ENCODE measurements at regions of chr1 and their contacts with region 1.

Region 1: DNA sequence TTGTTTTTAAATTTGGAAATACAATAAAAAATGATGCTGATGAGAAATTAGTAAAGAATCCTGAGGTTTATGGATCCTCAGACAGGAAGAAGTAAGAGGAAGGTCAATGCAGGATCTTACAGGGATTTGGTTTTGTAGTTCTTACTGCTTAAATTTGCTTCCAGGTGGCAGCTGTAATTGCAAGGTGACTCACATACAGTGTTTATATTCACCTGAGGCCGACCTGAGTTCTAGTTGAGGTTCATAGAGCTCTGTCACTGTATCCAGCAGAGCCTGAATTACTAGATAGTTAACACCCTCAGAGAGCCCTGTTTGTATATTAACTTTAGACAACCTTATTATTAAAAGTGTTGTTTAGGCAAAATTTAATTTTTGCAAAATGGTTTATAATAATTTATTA is 1.4 kb upstream of the WDR26 start:
- DNase-seq: peak; percentile 28
- H3K4me3 Mint-ChIP-seq: peak overlapping the region; percentile 81
- H3K27ac Mint-ChIP-seq: peak overlapping the region; percentile 83
- H3K4me1 Mint-ChIP-seq: peaks cover 40% of the 10 kb centered on the region
- H3K27me3 Mint-ChIP-seq: no peaks in the 10 kb centered on the region
- CTCF ChIP-seq: no peak

Region 2: DNA sequence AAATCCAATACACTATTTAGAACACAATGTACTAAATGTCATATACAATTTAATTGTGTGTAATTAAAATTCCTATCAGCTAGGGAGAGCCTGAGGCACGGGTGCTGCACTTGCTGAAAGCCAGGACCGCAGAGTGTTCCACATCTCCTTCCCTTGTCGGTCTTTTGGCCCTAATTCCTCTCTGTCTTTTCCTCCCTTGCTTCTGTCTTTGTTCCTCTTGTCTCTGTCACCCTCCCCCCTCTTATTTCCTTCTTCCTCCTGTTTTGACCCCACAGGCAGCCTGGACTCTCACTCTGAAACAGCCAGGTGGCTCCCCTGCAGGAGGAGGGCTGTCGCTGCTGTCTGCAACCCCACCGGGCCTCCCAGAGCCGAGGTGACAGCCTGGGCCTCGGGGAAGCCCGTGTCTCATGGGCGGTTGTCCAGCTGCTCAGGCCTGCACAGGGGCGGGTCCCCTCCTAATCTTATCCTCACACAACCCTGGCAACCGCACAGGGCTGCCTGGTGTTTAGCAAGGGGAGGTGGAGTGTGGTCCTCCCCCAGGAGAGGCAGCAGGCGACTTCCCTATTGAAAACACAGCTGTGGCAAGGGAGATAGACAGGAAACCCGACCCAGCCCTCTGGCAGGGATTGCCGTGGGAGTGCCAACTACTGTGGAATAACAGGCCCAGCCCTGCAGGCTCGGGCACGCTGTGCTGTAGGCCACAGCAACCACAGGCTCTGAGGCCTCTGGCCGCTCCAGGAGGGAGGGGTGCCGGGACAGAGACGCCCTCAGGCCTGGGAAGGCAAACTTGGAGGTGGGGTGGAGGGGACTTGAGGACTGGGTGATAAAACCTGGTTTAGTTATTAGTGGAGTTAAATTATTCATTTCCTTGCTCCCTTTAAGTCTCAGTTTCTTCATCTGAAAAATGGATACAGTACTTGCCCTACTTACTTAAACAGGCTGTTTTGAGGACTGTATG is 67.4 kb after region 1 on chr1:
- CTCF ChIA-PET with region 1: no interaction called
- intact Hi-C with region 1: loop called (anchors 2 kb)
- DNase-seq: peak; percentile 85
- H3K4me3 Mint-ChIP-seq: peak overlapping the region; percentile 18
- H3K27ac Mint-ChIP-seq: peak overlapping the region; percentile 14
- H3K4me1 Mint-ChIP-seq: peaks cover 38% of the 10 kb centered on the region
- H3K27me3 Mint-ChIP-seq: no peaks in the 10 kb centered on the region
- CTCF ChIP-seq: peak; percentile 30

Region 3: GRCh38 chr1:224800486-224801119 is 364.6 kb after region 1 on chr1:
- CTCF ChIA-PET with region 1: no interaction called
- intact Hi-C with region 1: no loop called
- DNase-seq: no peak
- H3K4me3 Mint-ChIP-seq: no peak overlapping the region
- H3K27ac Mint-ChIP-seq: no peak overlapping the region
- H3K4me1 Mint-ChIP-seq: no peaks in the 10 kb centered on the region
- H3K27me3 Mint-ChIP-seq: peaks cover 58% of the 10 kb centered on the region
- CTCF ChIP-seq: no peak